Activated CD8-positive, alpha-beta T cell treated with anti-CD3 and anti-CD28 coated beads, Interleukin-2, amount 10 ng/mL, durations not matched to agents 7 days and 5 days (primary cell): ENCODE measurements at regions of chrX and their contacts with region 1.

Region 1: DNA sequence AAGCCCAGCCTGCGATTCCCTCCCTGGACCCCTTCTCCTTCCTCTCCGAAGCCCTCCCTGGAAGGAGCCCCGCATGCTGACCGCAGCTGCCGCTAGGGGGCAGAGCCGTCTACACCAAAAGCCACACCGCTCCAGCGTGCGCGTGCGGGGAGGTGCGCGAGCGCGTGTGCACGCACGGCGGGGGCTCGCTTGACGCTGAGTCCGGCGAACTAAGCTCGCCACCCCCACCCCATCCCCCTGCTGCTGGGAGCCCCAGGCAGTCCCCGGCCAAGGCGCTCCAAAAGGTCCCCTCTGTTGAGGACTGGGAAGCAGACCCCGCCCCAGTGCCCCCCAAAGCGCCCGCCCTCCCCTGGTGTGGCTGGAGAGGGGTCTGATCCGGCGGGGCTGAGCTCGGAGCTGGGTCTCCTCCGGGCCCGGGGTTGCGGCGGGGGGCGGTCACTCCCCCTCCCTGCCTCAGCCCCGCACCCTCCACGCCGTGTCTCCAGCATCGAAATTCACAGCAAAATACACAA is 11.0 kb upstream of the CCNQ start:
- DNase-seq: peak; percentile 76
- ATAC-seq: peak; percentile 97
- H3K4me3 Mint-ChIP-seq: peak overlapping the region; percentile 51
- H3K27ac Mint-ChIP-seq: no peak overlapping the region
- H3K4me1 Mint-ChIP-seq: peaks cover 10% of the 10 kb centered on the region
- H3K27me3 Mint-ChIP-seq: peaks cover 7% of the 10 kb centered on the region

Region 2: DNA sequence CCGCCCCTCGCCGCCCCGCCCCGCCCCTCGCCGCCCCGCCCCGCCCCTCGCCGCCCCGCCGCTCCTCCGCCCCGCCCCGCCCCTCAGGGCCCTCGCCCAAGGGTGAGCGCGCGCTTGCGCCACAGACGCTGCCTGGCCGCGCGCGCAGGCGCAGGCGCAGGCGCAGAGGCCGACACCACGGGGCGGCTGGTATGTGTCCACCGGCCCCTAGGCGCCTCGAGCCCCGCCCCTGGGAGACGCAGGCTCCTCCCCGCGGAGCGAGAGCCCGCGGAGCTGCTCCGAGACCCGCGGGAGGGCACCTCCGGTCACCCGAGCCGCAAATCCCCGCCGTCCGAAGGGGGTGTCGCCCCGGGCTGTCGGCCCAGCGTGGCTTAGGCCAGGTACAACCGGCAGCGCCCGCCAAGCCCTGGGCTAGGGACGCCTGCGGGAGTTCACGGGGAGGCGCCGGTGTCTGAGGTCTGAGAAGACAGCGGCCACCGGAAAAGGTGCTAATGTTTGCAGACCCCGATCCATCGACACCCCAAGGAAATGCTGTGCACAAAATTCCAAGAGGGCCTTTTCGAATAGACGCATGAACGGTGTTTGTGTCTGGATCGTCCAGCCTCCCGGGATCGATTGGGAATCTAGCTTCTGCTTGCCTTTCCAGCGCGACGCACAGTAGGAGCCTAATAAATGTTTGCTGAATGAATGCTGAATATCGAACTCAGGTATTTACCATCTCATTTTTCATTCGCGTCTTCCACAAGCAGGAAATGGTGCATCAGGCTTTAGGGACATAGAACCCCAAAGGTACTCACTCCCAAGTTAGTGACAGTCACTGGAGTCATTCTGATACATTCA is 10.6 kb before region 1 on chrX:
- CTCF ChIA-PET with region 1: interaction called, 11 read pairs
- POLR2A ChIA-PET with region 1: no interaction called
- DNase-seq: peak; percentile 88
- ATAC-seq: peak; percentile 96
- H3K4me3 Mint-ChIP-seq: peak overlapping the region; percentile 84
- H3K27ac Mint-ChIP-seq: peak overlapping the region; percentile 79
- H3K4me1 Mint-ChIP-seq: peaks cover 29% of the 10 kb centered on the region
- H3K27me3 Mint-ChIP-seq: no peaks in the 10 kb centered on the region

Region 3: DNA sequence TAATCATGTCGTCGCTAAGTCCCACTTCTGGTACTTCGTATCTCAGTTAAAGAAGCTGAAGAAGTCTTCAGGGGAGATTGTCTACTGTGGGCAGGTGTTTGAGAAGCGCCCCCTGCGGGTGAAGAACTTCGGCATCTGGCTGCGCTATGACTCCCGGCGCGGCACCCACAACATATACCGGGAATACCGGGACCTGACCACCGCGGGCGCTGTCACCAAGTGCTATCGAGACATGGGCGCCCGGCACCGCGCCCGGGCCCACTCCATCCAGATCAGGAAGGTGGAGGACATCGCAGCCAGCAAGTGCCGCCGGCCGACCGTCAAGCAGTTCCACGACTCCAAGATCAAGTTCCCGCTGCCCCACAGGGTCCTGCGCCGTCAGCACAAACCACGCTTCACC is 52.3 kb after region 1 on chrX:
- CTCF ChIA-PET with region 1: interaction called, 10 read pairs
- POLR2A ChIA-PET with region 1: no interaction called
- DNase-seq: peak; percentile 61
- ATAC-seq: no peak
- H3K4me3 Mint-ChIP-seq: peak overlapping the region; percentile 34
- H3K27ac Mint-ChIP-seq: no peak overlapping the region
- H3K4me1 Mint-ChIP-seq: no peaks in the 10 kb centered on the region
- H3K27me3 Mint-ChIP-seq: peaks cover 26% of the 10 kb centered on the region

Region 4: GRCh38 chrX:153724252-153725040 is 114.5 kb after region 1 on chrX and contains the starts of genes ABCD1 and BCAP31:
- CTCF ChIA-PET with region 1: no interaction called
- POLR2A ChIA-PET with region 1: no interaction called
- DNase-seq: peak; percentile 91
- ATAC-seq: peak; percentile 84
- H3K4me3 Mint-ChIP-seq: peak within 1 kb of the TSS; percentile 88
- H3K27ac Mint-ChIP-seq: peak within 1 kb of the TSS; percentile 86
- H3K4me1 Mint-ChIP-seq: peaks cover 32% of the 10 kb centered on the region
- H3K27me3 Mint-ChIP-seq: no peaks in the 10 kb centered on the region
- total RNA-seq, gene ABCD1: 14.6 to 15.9 TPM
- total RNA-seq, gene BCAP31: 155 to 158 TPM